ENCODE measurements at regions of chr7 and their contacts with region 1.

Region 1: DNA sequence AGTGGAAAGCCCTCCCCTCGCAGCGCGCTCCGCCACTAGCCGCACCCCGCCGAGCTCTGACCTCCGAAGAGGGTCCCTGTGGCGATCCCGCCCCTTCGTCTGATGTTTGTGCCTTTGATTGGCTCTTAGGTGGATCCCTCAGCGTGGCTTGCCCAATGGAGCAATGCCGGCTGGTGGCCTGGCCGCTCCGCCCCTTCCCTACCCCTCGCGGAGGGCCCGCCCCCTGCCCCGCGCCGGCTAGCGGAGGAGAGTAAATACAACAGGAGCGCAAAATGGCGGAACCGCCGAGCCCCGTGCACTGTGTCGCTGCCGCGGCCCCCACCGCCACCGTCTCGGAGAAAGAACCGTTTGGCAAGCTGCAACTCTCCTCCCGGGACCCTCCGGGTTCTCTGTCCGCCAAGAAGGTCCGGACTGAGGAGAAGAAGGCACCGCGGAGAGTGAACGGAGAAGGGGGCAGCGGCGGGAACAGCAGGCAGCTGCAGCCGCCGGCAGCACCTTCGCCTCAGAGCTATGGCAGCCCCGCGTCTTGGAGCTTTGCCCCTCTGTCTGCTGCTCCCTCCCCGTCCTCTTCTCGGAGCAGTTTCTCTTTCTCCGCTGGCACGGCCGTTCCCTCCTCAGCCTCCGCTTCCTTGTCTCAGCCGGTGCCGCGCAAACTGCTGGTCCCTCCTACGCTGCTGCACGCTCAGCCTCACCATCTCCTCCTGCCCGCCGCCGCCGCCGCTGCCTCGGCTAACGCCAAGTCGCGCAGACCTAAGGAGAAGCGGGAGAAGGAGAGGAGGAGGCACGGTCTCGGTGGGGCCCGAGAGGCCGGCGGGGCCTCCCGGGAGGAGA is at the start of gene RSBN1L:
- DNase-seq: peak; percentile 96
- H3K4me3 ChIP-seq: peak within 1 kb of the TSS; percentile 51 to 96 (median 95)
- H3K27ac ChIP-seq: peak within 1 kb of the TSS; percentile 61
- H3K4me1 ChIP-seq: no peaks in the 10 kb centered on the region
- H3K27me3 ChIP-seq: no peaks in the 10 kb centered on the region
- CTCF ChIP-seq: peak; percentile 16 to 46
- total RNA-seq, gene RSBN1L: 8.8 to 12.8 TPM

Region 2: GRCh38 chr7:77501192-77501515 is 195.3 kb before region 1 on chr7:
- CTCF ChIA-PET with region 1: no interaction called
- dilution Hi-C with region 1: no loop called
- in situ Hi-C with region 1: no loop called
- intact Hi-C with region 1: no loop called
- DNase-seq: no peak
- H3K4me3 ChIP-seq: no peak overlapping the region
- H3K27ac ChIP-seq: no peak overlapping the region
- H3K4me1 ChIP-seq: no peaks in the 10 kb centered on the region
- H3K27me3 ChIP-seq: no peaks in the 10 kb centered on the region
- CTCF ChIP-seq: no peak

Region 3: GRCh38 chr7:77667459-77668086 is 28.8 kb before region 1 on chr7:
- CTCF ChIA-PET with region 1: no interaction called
- dilution Hi-C with region 1: no loop called
- in situ Hi-C with region 1: no loop called
- intact Hi-C with region 1: loop called (anchors 2 kb)
- DNase-seq: no peak
- H3K4me3 ChIP-seq: no peak overlapping the region
- H3K27ac ChIP-seq: no peak overlapping the region
- H3K4me1 ChIP-seq: peaks cover 19% of the 10 kb centered on the region
- H3K27me3 ChIP-seq: no peaks in the 10 kb centered on the region
- CTCF ChIP-seq: no peak

Region 4: DNA sequence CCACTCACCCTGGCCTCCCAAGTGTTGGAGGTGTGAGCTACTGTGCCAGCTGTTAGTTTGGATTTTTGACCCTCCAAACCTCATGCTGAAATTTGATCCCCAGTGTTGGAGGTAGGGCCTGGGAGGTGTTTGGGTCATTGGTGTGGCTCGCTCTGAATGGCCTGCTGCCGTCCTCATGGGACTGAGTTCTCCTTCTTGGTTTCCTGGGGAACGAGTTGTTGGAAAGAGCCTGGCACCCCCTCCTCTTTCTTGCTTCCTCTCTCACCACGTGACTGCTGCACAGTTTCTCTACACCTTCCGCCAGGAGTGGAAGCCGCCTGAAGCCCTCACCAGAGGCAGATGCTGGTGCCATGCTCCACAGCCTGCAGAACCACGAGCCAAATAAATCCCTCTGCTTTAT is 355.7 kb after region 1 on chr7:
- CTCF ChIA-PET with region 1: no interaction called
- dilution Hi-C with region 1: no loop called
- in situ Hi-C with region 1: no loop called
- intact Hi-C with region 1: no loop called
- DNase-seq: no peak
- H3K4me3 ChIP-seq: no peak overlapping the region
- H3K27ac ChIP-seq: no peak overlapping the region
- H3K4me1 ChIP-seq: no peaks in the 10 kb centered on the region
- H3K27me3 ChIP-seq: peaks cover 2% of the 10 kb centered on the region
- CTCF ChIP-seq: no peak

Measured in mammary epithelial cell (primary cell).